Left cardiac atrium (tissue), 4 donors: ENCODE measurements at regions of chr14 and their contacts with region 1.

Region 1: DNA sequence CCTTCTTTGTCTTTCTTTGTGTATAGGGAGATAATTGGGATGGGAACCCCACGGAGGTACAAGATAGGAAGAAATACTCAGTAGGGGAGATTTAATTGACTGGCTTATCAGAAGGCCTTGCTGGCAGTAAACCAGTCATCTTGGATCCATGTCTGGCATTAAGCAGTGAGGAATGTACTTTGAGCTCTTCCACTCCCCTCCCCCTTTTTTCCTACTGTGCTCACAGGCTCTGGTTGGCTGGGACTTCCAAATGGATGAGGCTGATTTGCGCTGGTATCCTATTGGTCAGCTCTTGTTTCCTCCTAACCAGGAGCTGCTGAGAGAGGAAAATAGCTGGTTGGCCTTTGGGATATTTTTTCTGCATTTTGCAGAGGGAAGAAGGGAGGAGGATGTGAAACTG is 24.7 kb downstream of the NGDN start:
- DNase-seq: no peak
- ATAC-seq: peak in 1 of 2 donors; percentile 70

Region 2: GRCh38 chr14:23528555-23528954 is 34.3 kb after region 1 on chr14:
- intact Hi-C with region 1: loop called in 1 of 2 experiments (anchors 5 kb)
- DNase-seq: no peak
- ATAC-seq: no peak